Caco-2 (cell line): ENCODE measurements at regions of chr15 and their contacts with region 1.

Region 1: DNA sequence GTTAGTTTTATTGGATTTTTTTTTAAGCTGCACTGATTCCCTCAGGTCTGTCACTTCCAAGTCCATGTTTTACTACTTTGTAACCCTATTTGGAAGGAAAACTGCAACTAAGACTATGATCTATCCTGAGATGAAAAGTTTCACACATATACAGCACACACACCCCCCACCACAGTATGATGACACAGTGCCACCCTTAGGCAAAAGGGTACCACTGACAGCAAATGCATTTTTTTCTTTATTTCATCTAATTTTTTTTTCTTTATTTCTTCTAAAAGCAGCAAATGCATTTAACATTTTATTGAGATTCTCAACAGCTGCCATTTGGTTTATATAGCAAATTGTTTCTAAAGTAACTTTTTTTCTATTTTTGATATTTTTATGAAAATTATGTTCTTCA is 21.2 kb downstream of the NGRN start:
- DNase-seq: peak in 1 of 2 experiments; percentile 24
- H3K4me3 ChIP-seq: no peak overlapping the region
- H3K4me3 Mint-ChIP-seq: no peak overlapping the region
- H3K27ac Mint-ChIP-seq: no peak overlapping the region
- H3K4me1 ChIP-seq: peaks cover 3% of the 10 kb centered on the region; the same call in 1 of the 2 replicates
- H3K4me1 Mint-ChIP-seq: no peaks in the 10 kb centered on the region
- H3K27me3 ChIP-seq: no peaks in the 10 kb centered on the region
- H3K27me3 Mint-ChIP-seq: no peaks in the 10 kb centered on the region
- CTCF ChIP-seq: peak in 1 of 2 experiments; percentile 43

Region 2: GRCh38 chr15:90143166-90143655 is 143.5 kb before region 1 on chr15:
- CTCF ChIA-PET with region 1: no interaction called
- POLR2A ChIA-PET with region 1: no interaction called
- intact Hi-C with region 1: loop called (anchors 5 kb)
- DNase-seq: peak; percentile 83 to 88
- H3K4me3 ChIP-seq: no peak overlapping the region
- H3K4me3 Mint-ChIP-seq: no peak overlapping the region
- H3K27ac Mint-ChIP-seq: no peak overlapping the region
- H3K4me1 ChIP-seq: no peaks in the 10 kb centered on the region
- H3K4me1 Mint-ChIP-seq: peaks cover 7% of the 10 kb centered on the region
- H3K27me3 ChIP-seq: no peaks in the 10 kb centered on the region
- H3K27me3 Mint-ChIP-seq: no peaks in the 10 kb centered on the region
- CTCF ChIP-seq: peak; percentile 79 to 91